HEK293 (cell line): ENCODE measurements at regions of chr17 and their contacts with region 1.

Region 1: DNA sequence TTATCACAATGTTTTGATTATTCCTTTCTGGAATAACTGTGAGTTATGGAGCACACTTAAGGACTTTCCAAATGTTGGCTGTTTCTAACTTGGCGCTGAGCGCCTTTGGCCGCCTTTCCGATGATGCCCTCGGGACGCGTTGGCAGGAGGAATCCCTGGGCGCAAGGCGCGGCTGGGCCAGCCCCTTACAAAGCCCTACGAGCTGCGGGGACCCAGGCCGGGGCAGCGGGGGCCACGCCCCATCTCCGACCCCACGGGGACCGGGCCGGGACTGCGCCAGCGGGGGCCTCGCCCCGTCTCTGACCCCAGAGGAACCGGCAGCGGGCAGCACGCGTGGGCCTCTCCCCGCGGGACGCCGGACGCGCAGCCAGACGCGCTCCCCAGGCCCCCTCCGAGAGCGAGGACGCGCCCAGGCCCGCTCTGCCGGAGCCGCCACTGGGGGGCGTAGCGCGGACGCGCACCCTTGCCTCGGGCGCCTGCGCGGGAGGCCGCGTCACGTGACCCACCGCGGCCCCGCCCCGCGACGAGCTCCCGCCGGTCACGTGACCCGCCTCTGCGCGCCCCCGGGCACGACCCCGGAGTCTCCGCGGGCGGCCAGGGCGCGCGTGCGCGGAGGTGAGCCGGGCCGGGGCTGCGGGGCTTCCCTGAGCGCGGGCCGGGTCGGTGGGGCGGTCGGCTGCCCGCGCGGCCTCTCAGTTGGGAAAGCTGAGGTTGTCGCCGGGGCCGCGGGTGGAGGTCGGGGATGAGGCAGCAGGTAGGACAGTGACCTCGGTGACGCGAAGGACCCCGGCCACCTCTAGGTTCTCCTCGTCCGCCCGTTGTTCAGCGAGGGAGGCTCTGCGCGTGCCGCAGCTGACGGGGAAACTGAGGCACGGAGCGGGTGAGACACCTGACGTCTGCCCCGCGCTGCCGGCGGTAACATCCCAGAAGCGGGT is at the start of gene GAA:
- H3K4me3 ChIP-seq: peak within 1 kb of the TSS; percentile 88
- H3K27ac ChIP-seq: peak within 1 kb of the TSS; percentile 73; the same call in 1 of the 2 replicates
- H3K4me1 ChIP-seq: peaks cover 4% of the 10 kb centered on the region; the same call in 1 of the 2 replicates
- CTCF ChIP-seq: no peak

Region 2: GRCh38 chr17:80082403-80083135 is 18.7 kb before region 1 on chr17:
- CTCF ChIA-PET with region 1: interaction called, 27 read pairs
- POLR2A ChIA-PET with region 1: interaction called, 13 read pairs
- H3K4me3 ChIP-seq: no peak overlapping the region
- H3K27ac ChIP-seq: no peak overlapping the region
- H3K4me1 ChIP-seq: no peaks in the 10 kb centered on the region
- CTCF ChIP-seq: peak; percentile 52; the same call in 1 of the 2 replicates

Region 3: GRCh38 chr17:80087346-80088265 is 13.7 kb before region 1 on chr17:
- CTCF ChIA-PET with region 1: interaction called, 31 read pairs
- POLR2A ChIA-PET with region 1: interaction called, 13 read pairs
- H3K4me3 ChIP-seq: no peak overlapping the region
- H3K27ac ChIP-seq: no peak overlapping the region
- H3K4me1 ChIP-seq: 0 out of 2 replicates have a peak, but pooled peaks cover 2% of the 10 kb centered on the region
- CTCF ChIP-seq: no peak

Region 4: GRCh38 chr17:80116276-80116920 is 15.1 kb after region 1 on chr17:
- CTCF ChIA-PET with region 1: interaction called, 27 read pairs
- POLR2A ChIA-PET with region 1: interaction called, 9 read pairs
- H3K4me3 ChIP-seq: no peak overlapping the region
- H3K27ac ChIP-seq: no peak overlapping the region
- H3K4me1 ChIP-seq: no peaks in the 10 kb centered on the region
- CTCF ChIP-seq: no peak

Region 5: DNA sequence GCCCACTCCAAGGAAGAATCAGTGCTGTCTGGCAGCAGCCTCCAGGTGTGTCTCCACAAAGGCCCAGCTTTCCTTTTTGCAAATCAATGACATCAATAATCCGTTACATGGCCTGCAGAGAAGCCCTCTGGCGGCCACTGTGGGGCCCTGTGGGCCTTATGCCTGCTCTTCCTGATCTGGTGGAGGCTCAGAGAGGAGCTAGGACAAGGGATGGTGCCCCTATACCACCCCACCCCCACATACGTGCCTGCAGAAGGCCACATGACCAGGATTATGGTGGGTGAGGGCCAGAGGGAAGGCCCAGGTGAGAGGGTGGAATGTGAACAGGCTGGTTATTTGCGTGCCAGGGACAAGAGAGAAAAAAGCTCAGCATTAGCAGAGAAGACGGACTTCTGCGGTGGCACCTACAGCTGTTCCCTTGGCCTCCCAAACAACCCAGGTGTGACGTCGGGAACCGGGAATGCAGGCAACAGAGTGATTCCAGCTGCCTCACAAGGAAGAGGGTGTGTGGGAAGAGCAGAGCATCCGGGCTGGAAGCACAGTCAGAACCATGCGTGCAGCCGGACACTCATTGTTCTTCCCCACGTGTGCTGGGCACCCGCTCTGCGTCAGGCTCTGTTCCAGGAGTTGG is 23.2 kb after region 1 on chr17:
- CTCF ChIA-PET with region 1: interaction called, 14 read pairs
- POLR2A ChIA-PET with region 1: interaction called, 10 read pairs
- H3K4me3 ChIP-seq: no peak overlapping the region
- H3K27ac ChIP-seq: no peak overlapping the region
- H3K4me1 ChIP-seq: no peaks in the 10 kb centered on the region
- CTCF ChIP-seq: no peak

Region 6: DNA sequence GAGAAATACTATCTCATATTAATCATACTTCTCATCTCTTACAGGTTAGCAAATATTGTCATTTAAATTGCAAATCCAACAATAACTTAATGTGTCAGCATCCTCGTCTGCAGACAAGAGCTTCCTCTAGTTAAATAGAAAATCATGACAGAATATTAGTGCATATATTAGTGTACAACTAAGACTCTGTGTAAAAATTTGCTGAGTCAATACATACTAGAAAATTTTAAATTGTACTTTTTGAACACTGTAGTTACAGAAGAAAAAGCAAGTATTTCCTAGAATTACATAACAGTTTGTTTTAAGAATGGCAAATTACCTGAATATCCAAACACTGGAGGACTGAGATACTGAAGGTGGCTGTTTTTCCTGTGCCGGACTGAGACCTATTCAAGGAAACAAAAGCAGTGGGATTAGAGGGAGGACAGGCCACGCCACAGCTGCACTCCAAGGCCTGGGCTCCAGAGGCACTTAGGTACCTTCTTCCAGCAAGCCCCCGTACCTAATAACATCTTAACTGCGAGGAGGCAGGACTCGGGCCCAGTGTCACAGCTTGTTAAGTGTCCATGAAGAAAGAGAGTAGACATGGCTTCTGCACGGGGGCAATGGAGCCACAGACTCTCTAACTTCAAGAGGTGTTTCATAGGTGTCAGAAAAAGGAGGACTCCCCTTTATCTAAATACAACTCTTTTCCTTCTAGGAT is 40.3 kb after region 1 on chr17:
- CTCF ChIA-PET with region 1: interaction called, 16 read pairs
- POLR2A ChIA-PET with region 1: interaction called, 24 read pairs
- H3K4me3 ChIP-seq: no peak overlapping the region
- H3K27ac ChIP-seq: no peak overlapping the region; the same call in 1 of the 2 replicates
- H3K4me1 ChIP-seq: no peaks in the 10 kb centered on the region; the same call in 1 of the 2 replicates
- CTCF ChIP-seq: no peak

Region 7: GRCh38 chr17:80147035-80147836 is 46.0 kb after region 1 on chr17 and contains the start of gene EIF4A3:
- CTCF ChIA-PET with region 1: interaction called, 16 read pairs
- POLR2A ChIA-PET with region 1: interaction called, 24 read pairs
- H3K4me3 ChIP-seq: peak within 1 kb of the TSS; percentile 97
- H3K27ac ChIP-seq: peak within 1 kb of the TSS; percentile 84
- H3K4me1 ChIP-seq: no peaks in the 10 kb centered on the region; the same call in 1 of the 2 replicates
- CTCF ChIP-seq: no peak